GM10248 (cell line): ENCODE measurements at regions of chr15 and their contacts with region 1.

Region 1: GRCh38 chr15:80970018-80970658 is 19.5 kb downstream of the MESD start:
- DNase-seq: peak; percentile 56
- CTCF ChIP-seq: peak; percentile 53

Region 2: DNA sequence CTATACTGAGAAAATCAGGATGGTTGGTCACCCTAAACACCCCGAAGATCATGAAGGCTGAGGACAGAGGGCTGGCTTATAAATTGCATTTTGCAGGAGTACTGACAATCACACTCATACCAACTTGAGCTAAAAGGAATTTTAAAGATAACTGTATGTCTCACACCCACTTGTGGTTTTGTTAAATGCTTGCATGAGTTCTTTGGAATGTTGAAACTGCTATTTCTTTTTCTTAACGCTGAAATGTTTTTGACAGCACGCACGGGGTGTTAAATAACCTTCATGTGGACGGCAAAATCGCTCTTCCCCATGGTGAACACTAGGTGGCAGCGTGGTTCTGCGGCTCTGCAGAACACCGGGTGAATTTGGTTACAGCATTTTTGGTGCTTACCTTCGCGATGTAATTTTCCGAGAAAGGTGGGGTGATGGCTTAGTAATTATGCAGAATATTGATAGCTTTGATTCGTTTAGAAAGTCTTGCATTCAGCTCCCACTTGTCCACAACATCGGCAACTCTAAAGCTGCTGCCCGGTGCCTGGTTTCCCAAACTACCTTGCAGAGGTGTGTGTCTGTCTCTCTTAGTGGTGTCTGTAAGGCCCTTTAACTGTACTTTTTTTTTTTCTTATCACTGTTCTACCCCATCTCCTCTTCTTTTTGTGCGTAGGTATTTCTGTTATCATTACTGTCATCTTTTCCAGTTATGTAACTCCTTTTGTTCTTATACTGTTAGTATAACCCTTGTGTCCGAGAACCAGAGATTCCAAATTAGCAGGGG is 514.3 kb before region 1 on chr15:
- CTCF ChIA-PET with region 1: interaction called, 19 read pairs
- POLR2A ChIA-PET with region 1: no interaction called
- DNase-seq: peak; percentile 72
- CTCF ChIP-seq: peak; percentile 91

Region 3: DNA sequence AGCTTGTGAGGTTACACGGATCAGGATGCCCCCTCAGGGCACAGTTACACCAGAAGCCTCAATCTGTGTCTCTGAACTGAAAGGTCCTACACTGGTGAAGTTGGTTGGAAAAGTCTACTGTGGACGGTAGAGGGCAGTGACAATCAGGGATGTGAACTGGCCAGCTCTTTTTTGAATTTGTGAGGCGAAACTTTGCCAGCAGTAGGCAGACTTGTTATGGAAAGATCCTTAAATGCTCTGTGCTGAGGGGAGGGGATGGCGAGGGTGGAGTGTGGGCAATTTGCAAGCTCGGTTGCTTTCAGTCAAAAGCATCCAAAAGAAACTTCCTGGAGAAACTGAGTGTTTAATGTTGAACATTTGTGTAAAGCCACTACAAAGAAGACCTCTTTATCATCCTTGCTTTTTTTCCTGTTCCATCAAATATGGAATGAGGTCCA is 402.4 kb before region 1 on chr15:
- CTCF ChIA-PET with region 1: interaction called, 10 read pairs
- POLR2A ChIA-PET with region 1: no interaction called
- DNase-seq: peak; percentile 49
- CTCF ChIP-seq: peak; percentile 40

Region 4: DNA sequence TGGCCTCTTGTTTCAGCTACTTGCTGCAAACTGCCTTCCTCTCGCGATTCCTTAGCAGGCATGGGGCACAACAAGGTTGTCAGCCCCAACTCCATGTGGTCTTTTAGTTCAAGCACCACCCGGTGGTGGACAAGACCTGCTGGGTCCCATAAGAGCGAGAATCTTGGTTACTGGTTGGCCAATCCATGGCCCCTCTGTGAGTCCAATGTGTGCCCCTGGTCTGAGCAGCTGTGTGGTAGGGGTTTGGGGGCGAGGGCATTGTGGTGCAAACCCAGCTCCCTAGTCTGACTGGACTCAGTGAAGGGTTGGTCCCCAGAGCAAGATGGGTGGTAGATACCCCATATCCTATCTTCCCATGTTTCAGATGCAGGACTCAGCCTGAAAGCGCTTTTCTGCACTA is 29.3 kb before region 1 on chr15:
- CTCF ChIA-PET with region 1: interaction called, 11 read pairs
- POLR2A ChIA-PET with region 1: no interaction called
- DNase-seq: no peak
- CTCF ChIP-seq: no peak

Region 5: DNA sequence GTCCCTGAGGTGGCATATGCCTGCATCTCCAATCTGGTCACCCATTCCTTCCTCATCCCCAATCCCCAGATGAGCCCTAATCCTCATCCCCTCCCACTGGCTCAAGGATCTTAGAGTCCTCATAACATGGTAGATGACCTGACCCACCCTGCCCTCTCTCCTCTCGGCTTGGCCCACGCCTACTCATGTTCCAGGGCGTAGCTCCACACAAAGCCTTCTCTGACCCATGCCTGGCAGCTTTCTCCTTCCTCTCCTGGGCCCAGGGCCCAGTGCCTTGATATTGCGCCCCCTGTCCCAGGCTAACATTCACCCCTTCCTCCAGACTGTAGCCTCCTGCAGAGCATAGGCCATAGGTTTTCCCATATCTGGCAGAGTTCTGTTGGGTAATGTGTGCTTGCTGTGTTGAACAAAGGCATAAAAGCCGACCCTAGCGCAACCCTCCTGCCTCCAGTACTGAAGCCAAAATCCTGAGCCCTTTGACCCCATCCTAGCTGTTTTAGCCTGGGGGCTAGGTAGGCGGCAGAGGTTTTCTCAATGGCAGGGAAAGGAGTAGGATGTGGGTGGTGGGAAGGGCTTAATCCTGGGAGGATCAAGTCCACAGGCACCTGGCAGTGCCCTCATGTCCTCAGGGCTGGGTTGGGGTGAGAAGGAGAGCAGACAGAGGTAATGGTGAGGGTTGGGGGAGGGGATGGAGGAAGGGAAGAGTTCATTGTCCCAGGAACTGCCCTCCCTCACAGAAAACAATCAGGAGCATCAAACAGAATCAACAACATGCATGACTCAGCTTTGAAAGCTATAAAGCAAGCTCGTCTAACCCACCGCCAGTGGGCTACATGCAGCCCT is 16.0 kb before region 1 on chr15:
- CTCF ChIA-PET with region 1: interaction called, 77 read pairs
- POLR2A ChIA-PET with region 1: no interaction called
- DNase-seq: no peak
- CTCF ChIP-seq: no peak

Region 6: DNA sequence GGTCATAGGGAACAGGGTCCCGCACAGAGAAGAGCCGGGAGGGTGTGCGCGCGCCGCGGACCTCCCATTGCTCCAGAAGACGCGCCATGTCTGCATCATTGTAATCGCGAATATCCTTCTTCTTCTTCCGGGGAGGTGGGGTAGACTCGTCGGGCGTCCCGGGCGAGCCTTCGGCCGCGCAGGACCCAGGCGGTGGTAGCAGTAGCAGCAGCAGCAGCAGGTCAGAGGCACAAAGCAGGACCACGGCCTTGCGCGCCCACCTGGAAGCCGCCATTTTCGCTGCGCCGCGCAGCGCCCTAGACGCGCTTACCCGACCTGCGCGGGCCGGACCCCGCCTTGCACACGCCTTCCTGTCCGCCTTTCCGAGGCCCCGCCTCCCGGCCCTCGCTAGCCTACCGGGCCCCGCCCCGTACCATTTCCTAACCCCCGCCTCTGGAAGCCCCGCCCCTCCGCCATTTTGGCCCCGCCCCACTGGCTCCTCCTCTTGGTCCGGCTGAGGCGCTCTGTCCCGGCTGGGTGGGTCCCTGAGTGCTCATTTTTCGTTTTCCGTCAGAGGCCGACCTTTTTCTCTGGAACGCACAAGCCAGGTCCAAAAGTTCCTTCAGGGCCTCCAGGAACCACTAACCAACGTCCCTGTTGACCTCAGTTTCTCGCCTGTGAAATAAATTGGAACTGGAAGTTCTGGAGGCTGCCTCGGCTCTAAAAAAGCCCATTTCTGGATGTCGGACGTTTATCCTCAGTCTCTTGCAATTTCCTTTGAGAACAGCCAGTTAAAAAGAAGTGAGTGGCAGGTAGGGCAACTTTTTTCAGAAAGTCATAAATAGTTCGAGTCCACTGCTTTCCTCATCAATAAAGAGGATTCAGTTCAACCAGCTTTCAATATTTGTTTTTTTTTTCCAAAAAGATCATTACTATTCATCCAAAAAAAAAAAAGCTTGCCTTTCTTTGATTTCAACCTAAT is 19.7 kb after region 1 on chr15 and contains the start of gene MESD:
- CTCF ChIA-PET with region 1: interaction called, 15 read pairs
- POLR2A ChIA-PET with region 1: no interaction called
- DNase-seq: peak; percentile 99
- CTCF ChIP-seq: no peak

Region 7: DNA sequence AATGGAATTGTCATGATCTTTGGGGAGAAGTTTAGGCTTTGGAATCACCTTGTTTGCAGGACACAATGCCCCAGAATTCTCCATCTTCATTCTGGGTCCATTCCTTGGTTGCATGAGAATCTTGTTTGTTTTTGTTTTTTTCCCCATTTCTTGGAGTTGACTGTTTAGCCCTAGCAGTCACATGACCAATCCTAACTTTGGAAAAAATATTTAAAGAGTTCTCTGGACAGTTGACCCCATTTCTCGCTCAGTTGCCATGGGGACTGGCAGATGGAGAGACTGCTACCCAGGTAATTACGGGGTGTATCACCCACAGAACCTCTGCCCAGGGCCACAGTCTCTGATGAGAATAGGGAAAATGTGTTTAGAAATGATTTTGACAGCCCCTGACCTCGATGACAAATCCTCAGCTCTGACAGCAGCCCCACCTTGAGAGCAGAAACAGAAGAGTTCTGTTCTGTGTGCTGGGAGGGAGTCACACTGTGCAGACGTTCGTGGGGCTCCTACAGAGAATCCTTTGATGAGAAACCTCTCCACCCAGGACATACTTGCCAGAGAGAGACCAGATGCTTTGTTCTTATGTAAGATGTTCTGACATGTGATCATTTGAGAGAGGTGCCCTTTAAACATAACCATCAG is 284.3 kb after region 1 on chr15:
- CTCF ChIA-PET with region 1: no interaction called
- POLR2A ChIA-PET with region 1: no interaction called
- DNase-seq: no peak
- CTCF ChIP-seq: no peak